CD4-positive, alpha-beta memory T cell (primary cell): ENCODE measurements at regions of chr10 and their contacts with region 1.

Region 1: DNA sequence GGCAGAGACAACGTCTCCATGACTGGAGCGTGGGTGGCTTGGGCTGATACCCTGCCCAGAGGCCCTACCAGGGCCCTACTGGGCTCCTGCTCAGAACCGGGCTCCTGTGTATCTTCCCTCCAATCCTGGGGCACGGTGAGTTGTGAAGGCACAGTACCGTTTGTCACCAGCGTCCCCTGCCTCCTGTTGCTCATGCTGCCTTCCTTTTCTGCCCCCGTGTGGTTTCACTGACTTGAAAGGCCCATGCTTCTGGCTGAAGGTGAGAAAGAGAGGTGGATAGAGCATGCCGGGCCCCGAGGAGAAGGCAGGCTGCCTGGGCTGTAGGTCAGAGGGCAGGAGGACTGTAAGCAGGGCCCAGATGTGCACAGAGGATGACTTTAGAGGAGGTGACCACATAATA is 9.1 kb upstream of the DMBT1 start:
- DNase-seq: peak; percentile 38 to 49 (median 41)
- H3K4me3 ChIP-seq: no peak overlapping the region
- H3K4me3 Mint-ChIP-seq: peak overlapping the region in 7 of 8 donors; percentile 24 to 78 (median 61)
- H3K27ac ChIP-seq: no peak overlapping the region
- H3K27ac Mint-ChIP-seq: peak overlapping the region; percentile 69 to 90 (median 87)
- H3K4me1 ChIP-seq: peaks cover 24% of the 10 kb centered on the region
- H3K4me1 Mint-ChIP-seq: peaks cover 21 to 42% (median 27%) of the 10 kb centered on the region in 4 donors
- H3K27me3 ChIP-seq: no peaks in the 10 kb centered on the region
- H3K27me3 Mint-ChIP-seq: no peaks in the 10 kb centered on the region

Region 2: GRCh38 chr10:122495406-122496340 is 55.8 kb before region 1 on chr10:
- CTCF ChIA-PET with region 1: interaction called, 10 read pairs
- POLR2A ChIA-PET with region 1: interaction called, 7 read pairs
- intact Hi-C with region 1: loop called (anchors 2 kb)
- DNase-seq: peak in 4 of 5 donors; percentile 28 to 44 (median 34)
- H3K4me3 ChIP-seq: no peak overlapping the region
- H3K4me3 Mint-ChIP-seq: peak overlapping the region in 7 of 8 donors; percentile 36 to 90 (median 62)
- H3K27ac ChIP-seq: no peak overlapping the region
- H3K27ac Mint-ChIP-seq: peak overlapping the region in 6 of 7 donors; percentile 15 to 89 (median 63)
- H3K4me1 ChIP-seq: peaks cover 36% of the 10 kb centered on the region
- H3K4me1 Mint-ChIP-seq: peaks cover 23 to 56% (median 41%) of the 10 kb centered on the region in 4 donors
- H3K27me3 ChIP-seq: no peaks in the 10 kb centered on the region
- H3K27me3 Mint-ChIP-seq: no peaks in the 10 kb centered on the region

Region 3: DNA sequence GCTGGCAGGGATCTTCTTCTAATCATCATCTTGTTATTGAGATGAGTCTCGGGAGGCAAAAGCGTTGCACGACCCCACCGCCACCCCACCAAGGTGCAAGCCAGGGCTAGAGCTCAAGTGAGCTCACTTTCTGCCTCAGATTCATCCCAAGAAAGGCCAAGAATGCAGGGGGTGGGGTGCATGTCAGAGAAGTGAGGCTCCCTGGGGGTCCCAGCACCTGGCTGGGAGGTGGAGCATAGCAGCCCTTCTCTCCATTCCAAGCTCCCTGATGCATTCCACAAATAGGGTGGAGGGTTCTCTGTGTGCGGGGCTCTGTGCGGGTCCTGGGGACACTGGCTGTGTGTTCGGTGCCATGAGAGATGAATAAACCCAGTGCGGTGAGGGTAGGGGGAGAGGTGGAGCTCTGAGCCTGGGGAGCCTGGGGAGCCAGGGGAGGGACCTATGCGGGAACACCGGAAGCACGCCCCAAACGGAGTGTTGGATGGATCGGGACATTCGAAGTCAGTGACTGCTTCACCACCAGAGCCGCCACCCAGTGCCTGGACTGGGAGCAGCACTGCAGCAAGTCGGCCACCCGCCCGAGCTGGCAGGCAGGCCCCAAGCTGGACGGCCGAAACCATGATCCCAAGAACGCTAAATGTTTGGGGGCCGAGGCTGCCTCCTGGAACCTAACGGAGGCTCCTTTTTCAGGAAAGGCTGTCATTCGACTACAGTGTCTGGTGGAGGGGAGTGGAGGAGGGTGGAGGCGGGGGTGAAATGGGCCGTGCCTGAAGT is 566.4 kb after region 1 on chr10:
- CTCF ChIA-PET with region 1: no interaction called
- POLR2A ChIA-PET with region 1: no interaction called
- intact Hi-C with region 1: no loop called
- DNase-seq: no peak
- H3K4me3 ChIP-seq: no peak overlapping the region
- H3K4me3 Mint-ChIP-seq: no peak overlapping the region
- H3K27ac ChIP-seq: no peak overlapping the region
- H3K27ac Mint-ChIP-seq: no peak overlapping the region
- H3K4me1 ChIP-seq: no peaks in the 10 kb centered on the region
- H3K4me1 Mint-ChIP-seq: peaks cover 0 to 1% (median 0%) of the 10 kb centered on the region in 4 donors
- H3K27me3 ChIP-seq: peaks cover 9% of the 10 kb centered on the region
- H3K27me3 Mint-ChIP-seq: peaks cover 30 to 33% of the 10 kb centered on the region in 2 donors